ENCODE measurements at regions of chr1 and their contacts with region 1.

Region 1: GRCh38 chr1:193019442-193020026 is 39.6 kb downstream of the UCHL5 start:
- H3K4me3 Mint-ChIP-seq: no peak overlapping the region
- H3K27ac Mint-ChIP-seq: no peak overlapping the region
- H3K4me1 Mint-ChIP-seq: no peaks in the 10 kb centered on the region
- H3K27me3 Mint-ChIP-seq: no peaks in the 10 kb centered on the region

Region 2: DNA sequence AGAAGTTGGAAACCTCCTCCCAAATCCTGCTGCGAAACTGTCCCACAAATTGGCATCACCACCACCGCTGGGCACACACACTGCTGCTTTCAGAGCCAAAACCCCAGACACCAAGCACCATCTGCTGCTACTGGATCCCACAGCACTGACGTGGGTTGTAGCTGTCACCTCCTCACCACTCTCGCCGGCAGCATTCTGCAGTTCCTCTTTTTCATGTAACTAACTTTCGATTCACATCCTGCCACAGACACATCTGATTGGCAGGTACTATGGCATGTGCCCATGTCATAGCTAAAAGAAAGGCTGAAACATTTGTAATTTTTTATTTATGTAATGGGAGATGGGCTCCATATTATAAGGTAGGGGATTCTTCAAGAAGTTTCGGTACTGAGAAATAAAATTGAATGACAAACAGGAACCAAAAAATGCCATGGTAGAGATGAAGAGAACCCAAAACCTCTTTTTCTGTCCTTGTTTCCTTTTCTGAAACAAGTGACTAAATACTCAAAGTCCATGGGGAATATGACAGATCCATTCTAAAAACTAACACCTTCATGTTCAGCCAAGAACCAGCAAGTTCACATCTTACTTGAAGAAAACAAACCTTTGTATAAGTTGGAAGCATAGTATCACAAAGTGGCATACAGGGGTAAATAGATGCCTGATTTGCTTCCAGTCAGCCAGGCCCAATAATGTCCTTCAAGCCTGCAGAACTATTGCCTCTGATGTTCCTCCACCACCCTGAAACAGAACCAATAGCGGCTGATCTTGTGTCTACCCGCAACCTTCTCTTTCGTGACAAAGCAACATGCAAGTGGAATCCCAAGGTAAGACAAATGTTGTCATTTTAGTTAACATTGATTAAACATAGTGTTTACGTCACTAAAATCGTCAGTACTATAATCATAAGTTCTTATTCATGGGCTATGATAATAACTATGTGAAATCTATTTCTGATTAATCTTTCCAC is 410.1 kb before region 1 on chr1:
- intact Hi-C with region 1: loop called (anchors 10 kb)
- H3K4me3 Mint-ChIP-seq: peak overlapping the region; percentile 9
- H3K27ac Mint-ChIP-seq: peak overlapping the region; percentile 56
- H3K4me1 Mint-ChIP-seq: peaks cover 21% of the 10 kb centered on the region
- H3K27me3 Mint-ChIP-seq: peaks cover 10% of the 10 kb centered on the region

Region 3: DNA sequence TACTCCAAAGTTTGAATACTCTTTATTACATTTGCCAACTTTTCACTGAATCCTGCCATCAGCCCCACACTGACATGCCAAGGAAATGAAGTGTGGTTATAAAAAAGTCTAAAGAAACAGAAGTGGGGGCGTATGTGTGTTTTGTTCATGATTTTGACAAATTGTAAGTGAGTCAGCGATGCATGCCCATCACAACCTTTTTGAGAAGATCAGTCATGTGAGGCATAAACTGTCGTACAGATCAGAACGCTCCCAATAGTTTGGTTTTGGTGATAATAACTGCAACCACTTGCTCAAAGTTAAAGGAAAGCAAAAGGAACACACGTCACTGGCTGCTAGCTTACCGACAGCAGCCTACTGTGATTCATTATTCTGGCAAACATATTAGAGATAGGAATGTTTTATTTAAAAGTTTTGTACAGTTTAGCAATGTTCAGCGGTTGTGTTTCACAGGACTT is 115.1 kb before region 1 on chr1:
- intact Hi-C with region 1: loop called (anchors 10 kb)
- H3K4me3 Mint-ChIP-seq: no peak overlapping the region
- H3K27ac Mint-ChIP-seq: no peak overlapping the region
- H3K4me1 Mint-ChIP-seq: peaks cover 21% of the 10 kb centered on the region
- H3K27me3 Mint-ChIP-seq: no peaks in the 10 kb centered on the region

Region 4: DNA sequence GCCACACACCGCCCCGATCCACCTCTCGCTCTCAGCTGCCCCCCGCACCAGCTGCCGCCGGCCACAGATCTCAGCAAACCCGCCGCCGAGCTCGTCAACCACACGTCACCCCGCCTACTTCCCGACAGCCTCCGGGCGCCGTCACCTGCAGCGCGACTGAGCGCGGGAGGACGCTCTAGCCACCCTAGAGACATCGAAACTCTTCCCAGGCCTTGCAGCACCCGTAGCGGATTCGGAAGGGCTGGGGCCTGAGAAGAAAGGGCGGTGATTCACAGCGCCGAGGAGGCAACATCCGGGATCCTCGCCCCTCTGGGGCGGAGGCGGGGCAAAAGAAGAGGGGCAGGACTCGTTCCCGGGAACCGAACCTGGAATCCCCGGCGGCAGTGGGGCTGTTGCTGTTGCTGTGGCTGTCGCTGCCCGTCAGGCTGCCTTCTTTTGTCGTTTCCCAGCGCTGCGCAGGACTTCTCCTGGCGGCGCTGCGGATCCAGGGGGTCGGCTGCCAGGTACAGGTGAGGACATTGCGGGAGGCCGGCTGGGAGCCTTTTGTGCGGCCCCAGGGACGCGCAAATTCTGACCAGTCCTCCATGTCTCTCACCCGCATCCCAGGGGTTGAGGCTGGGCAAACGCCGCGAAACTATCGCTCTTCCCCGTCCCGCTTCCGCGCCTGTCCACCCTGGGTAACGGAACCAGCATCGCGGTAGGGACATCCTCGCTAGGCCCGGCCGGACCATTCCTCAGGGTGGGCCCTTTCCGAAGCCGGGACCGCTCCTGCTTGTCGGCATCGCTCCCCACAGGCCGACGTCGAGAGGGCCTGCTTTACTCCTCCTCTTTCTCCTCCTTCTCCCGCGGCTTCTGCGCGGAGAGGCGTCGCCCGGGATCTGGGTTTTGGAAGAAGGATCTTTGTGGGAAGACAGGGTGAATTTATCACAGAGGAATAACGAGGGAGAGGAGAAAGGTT is 40.0 kb after region 1 on chr1 and contains the starts of genes RO60 and UCHL5:
- intact Hi-C with region 1: loop called (anchors 5 kb)
- H3K4me3 Mint-ChIP-seq: peak within 1 kb of the TSS; percentile 98
- H3K27ac Mint-ChIP-seq: peak within 1 kb of the TSS; percentile 97
- H3K4me1 Mint-ChIP-seq: peaks cover 39% of the 10 kb centered on the region
- H3K27me3 Mint-ChIP-seq: no peaks in the 10 kb centered on the region

Region 5: DNA sequence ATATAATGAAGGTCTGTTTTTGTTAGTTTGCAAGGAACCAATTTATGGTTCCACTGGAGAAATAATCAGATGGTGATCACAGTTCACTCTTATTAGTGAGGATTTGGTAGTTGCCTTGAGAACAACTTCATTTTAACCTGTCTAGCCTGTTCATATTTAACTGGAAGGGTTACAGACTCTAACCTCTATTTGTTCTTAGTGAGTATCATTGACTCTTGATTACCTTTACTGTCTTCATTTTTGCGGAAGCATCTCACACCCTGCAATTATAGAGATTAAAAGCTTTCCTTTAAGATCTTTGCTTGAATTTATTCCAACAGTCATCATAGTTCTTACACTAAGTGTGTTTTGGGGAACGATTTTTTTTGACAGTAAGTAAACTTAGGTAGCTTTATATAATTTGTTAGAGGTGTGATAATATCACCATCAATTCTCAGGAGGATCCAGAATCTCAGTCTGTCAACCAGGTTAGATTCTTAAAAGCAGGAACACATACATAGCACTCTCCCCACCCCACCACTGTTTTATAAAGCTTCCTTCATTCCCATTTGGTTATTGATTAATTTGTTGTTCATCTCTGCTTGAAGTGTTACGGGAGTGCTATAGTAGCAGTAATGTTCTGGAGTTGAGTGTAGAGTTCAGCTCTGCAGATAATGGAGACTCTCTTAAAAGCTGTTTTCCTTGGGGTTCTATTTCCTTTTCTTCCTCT is 136.7 kb after region 1 on chr1:
- intact Hi-C with region 1: no loop called
- H3K4me3 Mint-ChIP-seq: no peak overlapping the region
- H3K27ac Mint-ChIP-seq: no peak overlapping the region
- H3K4me1 Mint-ChIP-seq: peaks cover 5% of the 10 kb centered on the region
- H3K27me3 Mint-ChIP-seq: no peaks in the 10 kb centered on the region

Region 6: GRCh38 chr1:193634470-193634869 is 614.9 kb after region 1 on chr1:
- intact Hi-C with region 1: no loop called
- H3K4me3 Mint-ChIP-seq: no peak overlapping the region
- H3K27ac Mint-ChIP-seq: no peak overlapping the region
- H3K4me1 Mint-ChIP-seq: peaks cover 16% of the 10 kb centered on the region
- H3K27me3 Mint-ChIP-seq: no peaks in the 10 kb centered on the region

Measured in dendritic cell treated with granulocyte-macrophage colony-stimulating factor and Interleukin-4, amounts not matched to agents 40 ng/mL and 50 ng/mL, for 4 days (primary cell).